ENCODE measurements at regions of chr4 and their contacts with region 1.

Region 1: GRCh38 chr4:139167774-139168444 is 9.1 kb downstream of the ELF2 start:
- H3K4me3 Mint-ChIP-seq: no peak overlapping the region
- H3K27ac Mint-ChIP-seq: peak overlapping the region; percentile 70
- H3K4me1 Mint-ChIP-seq: peaks cover 61% of the 10 kb centered on the region
- H3K27me3 Mint-ChIP-seq: no peaks in the 10 kb centered on the region

Region 2: GRCh38 chr4:139099366-139099982 is 68.4 kb before region 1 on chr4:
- intact Hi-C with region 1: loop called (anchors 1 kb)
- H3K4me3 Mint-ChIP-seq: no peak overlapping the region
- H3K27ac Mint-ChIP-seq: no peak overlapping the region
- H3K4me1 Mint-ChIP-seq: no peaks in the 10 kb centered on the region
- H3K27me3 Mint-ChIP-seq: no peaks in the 10 kb centered on the region

Region 3: DNA sequence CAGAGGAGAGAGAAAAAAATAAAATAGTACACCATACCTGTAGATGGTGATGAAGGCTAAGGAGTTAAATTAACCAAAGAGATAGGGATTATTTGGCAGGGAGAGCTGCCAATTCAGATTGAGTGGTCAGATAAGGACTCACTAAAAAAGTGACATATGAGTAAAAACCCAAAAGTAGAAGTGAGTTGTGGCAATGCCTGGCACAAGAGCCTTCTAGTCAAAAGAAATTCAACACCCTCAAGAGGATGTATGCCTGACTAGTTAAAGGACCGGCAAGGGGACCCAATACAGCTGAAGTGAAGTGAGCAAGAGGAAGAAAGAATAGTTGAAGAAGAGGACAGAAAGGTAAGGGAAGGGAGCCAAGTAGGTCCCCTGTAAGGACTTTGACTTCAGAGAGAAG is 25.8 kb before region 1 on chr4:
- intact Hi-C with region 1: no loop called
- H3K4me3 Mint-ChIP-seq: no peak overlapping the region
- H3K27ac Mint-ChIP-seq: no peak overlapping the region
- H3K4me1 Mint-ChIP-seq: peaks cover 61% of the 10 kb centered on the region
- H3K27me3 Mint-ChIP-seq: no peaks in the 10 kb centered on the region